GM23248 (cell line): ENCODE measurements at regions of chr13 and their contacts with region 1.

Region 1: GRCh38 chr13:106520205-106521054 is 15.0 kb downstream of the EFNB2 start:
- DNase-seq: peak; percentile 47
- H3K4me3 ChIP-seq: no peak overlapping the region
- H3K27ac ChIP-seq: no peak overlapping the region
- H3K4me1 ChIP-seq: no peaks in the 10 kb centered on the region
- H3K27me3 ChIP-seq: no peaks in the 10 kb centered on the region

Region 2: GRCh38 chr13:105552078-105552477 is 968.4 kb before region 1 on chr13:
- in situ Hi-C with region 1: no loop called
- DNase-seq: no peak
- H3K4me3 ChIP-seq: no peak overlapping the region
- H3K27ac ChIP-seq: no peak overlapping the region
- H3K4me1 ChIP-seq: no peaks in the 10 kb centered on the region
- H3K27me3 ChIP-seq: no peaks in the 10 kb centered on the region

Region 3: DNA sequence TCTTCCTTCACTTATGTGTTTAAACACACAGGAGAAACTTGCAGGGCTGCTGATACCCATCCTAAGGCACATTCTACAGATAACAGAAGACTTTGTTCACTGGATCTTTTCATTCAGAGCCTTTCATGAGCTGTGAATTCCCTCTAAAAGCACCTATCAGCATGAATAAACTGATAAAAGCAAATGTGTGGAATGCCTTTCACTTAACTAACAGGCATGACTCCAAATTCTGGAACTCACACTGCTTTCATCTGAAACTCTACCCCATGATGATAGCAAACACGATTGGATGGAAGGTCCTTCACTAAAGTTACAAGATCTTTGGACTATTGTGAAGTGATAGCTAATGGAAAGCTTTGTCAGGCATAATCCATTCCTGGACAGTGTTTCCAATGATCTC is 442.2 kb before region 1 on chr13:
- in situ Hi-C with region 1: loop called (anchors 10 kb)
- DNase-seq: no peak
- H3K4me3 ChIP-seq: no peak overlapping the region
- H3K27ac ChIP-seq: no peak overlapping the region
- H3K4me1 ChIP-seq: no peaks in the 10 kb centered on the region
- H3K27me3 ChIP-seq: peaks cover 5% of the 10 kb centered on the region

Region 4: DNA sequence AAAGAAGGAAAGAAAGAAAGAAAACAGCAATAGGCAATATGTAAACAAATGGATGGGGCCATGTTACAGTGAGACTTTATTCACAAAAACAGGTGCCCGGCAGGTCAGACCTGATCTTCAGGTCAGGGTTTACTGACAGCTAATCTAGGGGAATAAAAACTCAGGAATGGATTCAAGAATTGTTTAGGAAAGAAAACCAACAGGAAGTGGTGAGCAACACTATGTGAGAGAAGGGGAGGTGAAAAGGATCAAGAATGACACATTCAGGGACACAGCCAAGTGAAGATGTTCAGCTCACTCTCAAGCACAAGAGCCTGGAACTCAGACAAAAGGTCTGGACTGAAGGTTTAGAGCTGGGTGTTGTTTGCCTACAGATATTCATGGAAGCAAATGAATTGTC is 229.4 kb before region 1 on chr13:
- in situ Hi-C with region 1: no loop called
- DNase-seq: peak; percentile 56
- H3K4me3 ChIP-seq: no peak overlapping the region
- H3K27ac ChIP-seq: no peak overlapping the region
- H3K4me1 ChIP-seq: no peaks in the 10 kb centered on the region
- H3K27me3 ChIP-seq: peaks cover 5% of the 10 kb centered on the region; the same call in 1 of the 2 replicates